ENCODE measurements at regions of chr12 and their contacts with region 1.

Region 1: GRCh38 chr12:121443193-121443870 is 43.4 kb downstream of the RNF34 start:
- DNase-seq: peak; percentile 84 to 90 (median 86)
- ATAC-seq: peak; percentile 90
- H3K4me3 ChIP-seq: no peak overlapping the region
- H3K27ac ChIP-seq: no peak overlapping the region
- H3K4me1 ChIP-seq: no peaks in the 10 kb centered on the region
- H3K27me3 ChIP-seq: no peaks in the 10 kb centered on the region
- CTCF ChIP-seq: peak; percentile 81 to 93 (median 88)
- POLR2A ChIP-seq: no peak

Region 2: DNA sequence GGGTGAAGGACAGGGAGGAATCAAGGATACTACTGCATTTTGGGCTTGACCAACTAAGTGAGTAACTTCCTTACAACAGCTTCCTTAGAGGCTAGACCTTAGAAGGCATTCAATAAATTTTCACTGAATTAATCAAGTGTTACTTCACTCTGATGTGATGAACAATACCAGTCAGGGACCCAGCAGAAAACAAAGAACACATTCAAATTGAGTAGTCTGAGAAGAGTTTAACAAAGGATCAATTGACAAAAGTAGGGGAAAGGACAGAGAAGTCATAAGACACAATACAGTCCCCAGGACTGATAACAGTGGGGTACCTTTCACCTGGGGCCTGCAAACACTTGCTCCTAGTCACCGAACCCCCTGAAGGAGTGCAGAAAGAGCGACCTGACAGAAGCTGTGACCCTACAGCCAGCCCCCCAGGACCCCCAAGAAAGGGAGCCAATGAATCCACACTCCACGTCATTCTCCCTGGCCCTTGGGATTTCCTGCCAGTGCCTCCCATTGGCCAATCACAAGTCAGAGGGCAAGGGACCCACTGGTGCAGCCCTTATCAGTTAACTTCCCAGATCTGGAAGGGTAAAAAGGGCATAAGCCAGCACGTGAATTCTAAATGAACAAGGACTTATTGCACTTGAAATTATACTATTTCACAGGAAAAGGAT is 98.0 kb before region 1 on chr12:
- intact Hi-C with region 1: loop called (anchors 10 kb)
- DNase-seq: no peak
- ATAC-seq: no peak
- H3K4me3 ChIP-seq: no peak overlapping the region
- H3K27ac ChIP-seq: no peak overlapping the region
- H3K4me1 ChIP-seq: peaks cover 6% of the 10 kb centered on the region
- H3K27me3 ChIP-seq: no peaks in the 10 kb centered on the region
- CTCF ChIP-seq: no peak
- POLR2A ChIP-seq: no peak

Region 3: DNA sequence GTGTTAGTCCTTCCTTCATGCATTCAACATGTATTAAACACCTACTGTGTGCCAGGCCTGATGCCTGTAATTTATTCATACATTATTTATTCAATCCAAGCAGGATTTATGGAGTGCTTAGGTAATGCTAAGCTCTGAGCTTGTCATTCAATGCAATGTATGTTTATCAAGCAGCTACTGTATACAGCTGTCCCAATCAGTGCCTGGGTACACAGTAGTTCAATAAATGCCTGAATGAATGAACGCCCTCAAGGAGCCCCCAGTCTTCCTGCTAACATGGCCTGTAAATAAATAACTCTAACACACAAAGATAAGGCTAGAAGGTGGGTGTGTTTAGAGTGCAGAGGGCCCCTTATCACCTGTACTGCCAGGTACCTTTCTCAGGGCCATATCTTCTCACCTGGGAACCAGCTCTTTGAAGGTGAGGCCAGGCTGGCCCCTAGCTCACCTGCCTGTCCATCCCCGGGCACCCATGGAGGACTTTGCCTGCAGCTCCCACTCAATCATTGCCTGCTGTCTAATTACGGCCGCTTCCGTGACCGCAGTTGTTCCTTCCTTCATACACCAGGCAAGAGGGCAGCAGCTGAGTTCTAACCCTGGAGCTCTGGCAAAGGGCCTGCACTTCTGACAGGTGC is 157.5 kb after region 1 on chr12:
- intact Hi-C with region 1: no loop called
- DNase-seq: peak; percentile 37 to 77 (median 58)
- ATAC-seq: peak; percentile 83
- H3K4me3 ChIP-seq: no peak overlapping the region
- H3K27ac ChIP-seq: peak overlapping the region in 3 of 4 donors; percentile 18 to 27 (median 21)
- H3K4me1 ChIP-seq: peaks cover 13% of the 10 kb centered on the region
- H3K27me3 ChIP-seq: no peaks in the 10 kb centered on the region
- CTCF ChIP-seq: no peak
- POLR2A ChIP-seq: no peak